CD8-positive, alpha-beta T cell (primary cell): ENCODE measurements at regions of chr14 and their contacts with region 1.

Region 1: GRCh38 chr14:73422515-73422914 is 35.8 kb downstream of the NUMB start:
- DNase-seq: no peak
- ATAC-seq: no peak
- H3K4me3 ChIP-seq: no peak overlapping the region
- H3K4me3 Mint-ChIP-seq: no peak overlapping the region
- H3K27ac ChIP-seq: no peak overlapping the region
- H3K27ac Mint-ChIP-seq: no peak overlapping the region
- H3K4me1 ChIP-seq: no peaks in the 10 kb centered on the region
- H3K4me1 Mint-ChIP-seq: peaks cover 14% of the 10 kb centered on the region
- H3K27me3 ChIP-seq: no peaks in the 10 kb centered on the region
- H3K27me3 Mint-ChIP-seq: no peaks in the 10 kb centered on the region
- CTCF ChIP-seq: no peak

Region 2: DNA sequence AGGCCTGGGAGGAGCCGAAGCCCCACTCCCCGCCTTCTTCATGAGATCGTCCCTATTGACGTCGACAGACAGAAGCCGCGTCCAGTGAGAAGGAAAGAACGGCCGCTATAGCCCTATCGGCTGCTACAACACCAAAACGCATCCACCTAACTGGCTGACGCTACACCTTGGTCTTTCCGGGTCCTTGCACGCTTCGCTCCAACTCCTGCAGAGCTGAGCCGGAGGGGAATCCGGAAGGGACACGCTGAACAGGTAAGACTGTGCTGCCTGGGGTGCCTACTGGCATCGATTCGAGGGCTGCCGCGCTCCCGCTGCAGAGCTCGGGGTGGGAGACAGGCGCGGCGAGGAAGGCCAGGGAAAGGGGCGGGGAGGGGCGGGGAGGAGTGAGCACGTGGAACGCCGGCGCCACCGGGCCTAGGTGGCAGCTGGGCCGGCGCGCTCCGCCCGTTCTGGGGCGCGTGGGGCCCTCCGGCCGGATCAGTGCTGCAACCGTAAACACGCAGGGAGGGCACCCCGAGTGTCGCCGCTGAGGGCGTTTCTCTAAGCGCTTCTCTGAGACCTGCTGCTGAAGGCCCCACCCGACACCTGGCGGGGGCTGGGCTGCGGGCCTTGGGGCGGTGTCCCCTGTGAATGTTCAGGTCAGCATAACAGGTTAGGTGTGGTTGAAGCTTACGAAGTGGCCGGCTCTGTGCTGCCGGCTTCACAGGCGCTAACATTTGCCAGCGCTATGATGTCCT is 496.1 kb before region 1 on chr14 and contains the start of gene DCAF4:
- CTCF ChIA-PET with region 1: no interaction called
- POLR2A ChIA-PET with region 1: no interaction called
- intact Hi-C with region 1: no loop called
- DNase-seq: peak; percentile 89 to 97 (median 93)
- ATAC-seq: peak; percentile 93
- H3K4me3 ChIP-seq: peak within 1 kb of the TSS; percentile 79 to 87
- H3K4me3 Mint-ChIP-seq: peak within 1 kb of the TSS; percentile 94
- H3K27ac ChIP-seq: peak within 1 kb of the TSS; percentile 67 to 76
- H3K27ac Mint-ChIP-seq: peak within 1 kb of the TSS; percentile 92
- H3K4me1 ChIP-seq: peaks cover 13% of the 10 kb centered on the region
- H3K4me1 Mint-ChIP-seq: peaks cover 15% of the 10 kb centered on the region
- H3K27me3 ChIP-seq: no peaks in the 10 kb centered on the region
- H3K27me3 Mint-ChIP-seq: peaks cover 2% of the 10 kb centered on the region
- CTCF ChIP-seq: no peak
- total RNA-seq, gene DCAF4: 21.9 to 26.6 TPM

Region 3: DNA sequence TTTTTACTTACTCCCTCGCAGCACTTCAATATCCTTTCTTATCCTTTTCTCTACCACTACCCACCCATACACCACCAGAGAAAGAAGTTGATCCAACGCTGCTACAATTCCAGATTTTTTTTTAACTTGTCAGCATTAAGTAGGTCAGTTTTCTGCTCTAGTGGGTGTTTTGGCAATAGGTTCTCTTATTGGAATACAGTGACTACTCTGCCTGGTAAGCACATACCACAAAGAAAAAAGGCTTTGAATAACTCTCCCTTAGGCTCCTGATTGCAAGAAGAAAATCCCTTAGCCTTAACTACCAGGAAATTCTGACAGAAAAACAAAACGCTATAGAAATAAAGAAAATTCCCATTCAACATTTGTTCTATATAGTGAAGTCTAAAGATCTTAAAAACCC is 36.2 kb before region 1 on chr14:
- CTCF ChIA-PET with region 1: no interaction called
- POLR2A ChIA-PET with region 1: no interaction called
- intact Hi-C with region 1: loop called in 1 of 2 experiments (anchors 2 kb)
- DNase-seq: no peak
- ATAC-seq: no peak
- H3K4me3 ChIP-seq: no peak overlapping the region
- H3K4me3 Mint-ChIP-seq: no peak overlapping the region
- H3K27ac ChIP-seq: no peak overlapping the region
- H3K27ac Mint-ChIP-seq: no peak overlapping the region
- H3K4me1 ChIP-seq: no peaks in the 10 kb centered on the region
- H3K4me1 Mint-ChIP-seq: peaks cover 7% of the 10 kb centered on the region
- H3K27me3 ChIP-seq: no peaks in the 10 kb centered on the region
- H3K27me3 Mint-ChIP-seq: no peaks in the 10 kb centered on the region
- CTCF ChIP-seq: no peak